ENCODE measurements at regions of chr6 and their contacts with region 1.

Region 1: GRCh38 chr6:122530440-122531046 is 58.9 kb upstream of the SERINC1 start:
- DNase-seq: peak; percentile 64
- H3K4me3 ChIP-seq: no peak overlapping the region
- H3K27ac ChIP-seq: no peak overlapping the region
- H3K4me1 ChIP-seq: no peaks in the 10 kb centered on the region
- H3K27me3 ChIP-seq: no peaks in the 10 kb centered on the region
- CTCF ChIP-seq: peak; percentile 67 to 91 (median 76)
- POLR2A ChIP-seq: no peak

Region 2: GRCh38 chr6:122381497-122382265 is 148.9 kb before region 1 on chr6:
- intact Hi-C with region 1: loop called (anchors 5 kb)
- DNase-seq: peak; percentile 46
- H3K4me3 ChIP-seq: no peak overlapping the region
- H3K27ac ChIP-seq: no peak overlapping the region
- H3K4me1 ChIP-seq: no peaks in the 10 kb centered on the region
- H3K27me3 ChIP-seq: no peaks in the 10 kb centered on the region
- CTCF ChIP-seq: peak in 3 of 4 experiments; percentile 63 to 64 (median 63)
- POLR2A ChIP-seq: no peak

Region 3: GRCh38 chr6:122491919-122492555 is 38.5 kb before region 1 on chr6:
- intact Hi-C with region 1: loop called (anchors 5 kb)
- DNase-seq: peak; percentile 47
- H3K4me3 ChIP-seq: no peak overlapping the region
- H3K27ac ChIP-seq: no peak overlapping the region
- H3K4me1 ChIP-seq: no peaks in the 10 kb centered on the region
- H3K27me3 ChIP-seq: no peaks in the 10 kb centered on the region
- CTCF ChIP-seq: peak; percentile 28 to 73 (median 66)
- POLR2A ChIP-seq: no peak

Measured in prostate gland (tissue), 2 donors.